Activated CD8-positive, alpha-beta T cell treated with anti-CD3 and anti-CD28 coated beads, Interleukin-2, amount 10 ng/mL, durations not matched to agents 7 days and 5 days (primary cell): ENCODE measurements at regions of chr1 and their contacts with region 1.

Region 1: GRCh38 chr1:205658943-205659581 is 21.2 kb downstream of the SLC45A3 start:
- DNase-seq: peak; percentile 82
- ATAC-seq: peak; percentile 93
- H3K4me3 Mint-ChIP-seq: no peak overlapping the region
- H3K27ac Mint-ChIP-seq: no peak overlapping the region
- H3K4me1 Mint-ChIP-seq: no peaks in the 10 kb centered on the region
- H3K27me3 Mint-ChIP-seq: peaks cover 5% of the 10 kb centered on the region

Region 2: DNA sequence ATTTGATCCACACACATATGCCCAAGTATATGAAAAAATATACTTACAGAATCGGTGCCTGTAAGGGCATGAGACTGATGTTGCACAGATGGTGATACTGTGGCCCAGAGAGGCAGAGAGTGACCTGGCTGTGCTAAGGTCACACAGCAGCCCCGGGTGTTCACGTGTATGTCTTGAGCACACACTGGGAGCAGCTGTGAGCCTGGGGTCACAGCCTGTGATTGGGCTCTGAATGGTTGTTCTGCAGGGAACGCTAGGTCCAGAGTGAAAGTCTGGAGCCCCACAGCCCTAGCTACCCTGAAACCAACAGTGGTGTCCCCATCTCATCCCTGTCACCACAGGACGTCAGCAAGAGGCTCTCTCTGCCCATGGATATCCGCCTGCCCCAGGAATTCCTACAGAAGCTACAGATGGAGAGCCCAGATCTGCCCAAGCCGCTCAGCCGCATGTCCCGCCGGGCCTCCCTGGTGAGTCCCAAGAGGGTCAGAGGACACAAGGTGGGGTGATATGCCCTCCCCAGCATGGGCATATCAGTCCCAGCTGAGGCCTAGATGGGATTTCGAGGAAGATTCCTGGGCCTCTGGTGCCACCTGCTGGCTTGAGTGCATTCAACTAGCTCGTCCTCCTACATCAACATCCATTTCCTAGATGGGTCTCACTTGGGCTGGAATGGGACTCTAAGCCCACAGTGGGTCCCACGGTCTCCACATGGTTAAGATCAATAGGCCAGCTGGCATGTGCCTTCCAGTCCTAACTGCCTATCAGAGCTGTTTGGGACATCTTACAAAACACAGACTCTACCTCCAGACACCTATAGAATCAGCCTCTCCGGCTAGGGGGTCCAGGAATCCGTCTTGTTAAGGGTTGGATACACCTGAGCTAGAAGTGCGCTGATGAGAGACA is 134.9 kb before region 1 on chr1:
- CTCF ChIA-PET with region 1: interaction called, 104 read pairs
- POLR2A ChIA-PET with region 1: no interaction called
- DNase-seq: peak; percentile 79
- ATAC-seq: no peak
- H3K4me3 Mint-ChIP-seq: no peak overlapping the region
- H3K27ac Mint-ChIP-seq: no peak overlapping the region
- H3K4me1 Mint-ChIP-seq: no peaks in the 10 kb centered on the region
- H3K27me3 Mint-ChIP-seq: no peaks in the 10 kb centered on the region

Region 3: DNA sequence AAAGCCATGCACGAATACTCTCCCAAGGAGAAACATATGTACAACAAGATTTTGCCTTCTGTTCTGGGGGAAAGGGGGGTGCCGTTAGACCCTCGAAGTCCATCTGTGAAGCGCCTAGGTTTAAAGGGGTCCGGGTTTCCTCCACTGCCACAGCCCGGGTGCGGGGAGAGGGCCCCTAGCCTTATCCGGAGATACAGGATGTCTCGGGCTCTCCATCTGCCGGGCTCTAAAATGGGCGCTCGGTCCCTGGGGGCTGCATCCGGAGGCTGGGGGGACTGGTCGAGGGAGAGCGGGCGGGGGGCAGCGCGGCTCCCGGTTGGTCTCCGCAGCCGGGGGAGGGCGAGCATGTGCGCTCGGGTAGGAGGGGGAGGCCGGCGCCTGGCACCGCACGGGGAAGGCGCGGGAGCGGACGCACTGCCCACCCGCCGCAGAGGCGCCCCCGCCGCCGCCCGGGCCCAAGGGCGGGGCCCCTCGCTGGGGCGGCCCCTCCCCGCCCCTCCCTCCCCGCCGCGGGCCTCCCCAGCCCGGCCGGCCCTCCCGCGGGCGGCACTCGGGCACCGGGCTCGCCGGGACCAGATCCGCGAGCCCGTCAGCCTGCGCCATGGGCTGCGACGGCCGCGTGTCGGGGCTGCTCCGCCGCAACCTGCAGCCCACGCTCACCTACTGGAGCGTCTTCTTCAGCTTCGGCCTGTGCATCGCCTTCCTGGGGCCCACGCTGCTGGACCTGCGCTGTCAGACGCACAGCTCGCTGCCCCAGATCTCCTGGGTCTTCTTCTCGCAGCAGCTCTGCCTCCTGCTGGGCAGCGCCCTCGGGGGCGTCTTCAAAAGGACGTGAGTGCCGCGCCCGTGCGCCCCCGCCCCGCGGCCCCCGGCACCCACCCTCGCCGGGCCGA is 90.3 kb before region 1 on chr1:
- CTCF ChIA-PET with region 1: interaction called, 17 read pairs
- POLR2A ChIA-PET with region 1: no interaction called
- DNase-seq: no peak
- ATAC-seq: peak; percentile 56
- H3K4me3 Mint-ChIP-seq: no peak overlapping the region
- H3K27ac Mint-ChIP-seq: no peak overlapping the region
- H3K4me1 Mint-ChIP-seq: peaks cover 3% of the 10 kb centered on the region
- H3K27me3 Mint-ChIP-seq: peaks cover 55% of the 10 kb centered on the region

Region 4: GRCh38 chr1:205631727-205632373 is 27.2 kb before region 1 on chr1 and contains the start of gene ELK4:
- CTCF ChIA-PET with region 1: interaction called, 138 read pairs
- POLR2A ChIA-PET with region 1: interaction called, 13 read pairs
- DNase-seq: peak; percentile 99
- ATAC-seq: peak; percentile 83
- H3K4me3 Mint-ChIP-seq: peak within 1 kb of the TSS; percentile 90
- H3K27ac Mint-ChIP-seq: peak within 1 kb of the TSS; percentile 98
- H3K4me1 Mint-ChIP-seq: peaks cover 42% of the 10 kb centered on the region
- H3K27me3 Mint-ChIP-seq: peaks cover 4% of the 10 kb centered on the region
- total RNA-seq, gene ELK4: 95.2 to 97.5 TPM

Region 5: DNA sequence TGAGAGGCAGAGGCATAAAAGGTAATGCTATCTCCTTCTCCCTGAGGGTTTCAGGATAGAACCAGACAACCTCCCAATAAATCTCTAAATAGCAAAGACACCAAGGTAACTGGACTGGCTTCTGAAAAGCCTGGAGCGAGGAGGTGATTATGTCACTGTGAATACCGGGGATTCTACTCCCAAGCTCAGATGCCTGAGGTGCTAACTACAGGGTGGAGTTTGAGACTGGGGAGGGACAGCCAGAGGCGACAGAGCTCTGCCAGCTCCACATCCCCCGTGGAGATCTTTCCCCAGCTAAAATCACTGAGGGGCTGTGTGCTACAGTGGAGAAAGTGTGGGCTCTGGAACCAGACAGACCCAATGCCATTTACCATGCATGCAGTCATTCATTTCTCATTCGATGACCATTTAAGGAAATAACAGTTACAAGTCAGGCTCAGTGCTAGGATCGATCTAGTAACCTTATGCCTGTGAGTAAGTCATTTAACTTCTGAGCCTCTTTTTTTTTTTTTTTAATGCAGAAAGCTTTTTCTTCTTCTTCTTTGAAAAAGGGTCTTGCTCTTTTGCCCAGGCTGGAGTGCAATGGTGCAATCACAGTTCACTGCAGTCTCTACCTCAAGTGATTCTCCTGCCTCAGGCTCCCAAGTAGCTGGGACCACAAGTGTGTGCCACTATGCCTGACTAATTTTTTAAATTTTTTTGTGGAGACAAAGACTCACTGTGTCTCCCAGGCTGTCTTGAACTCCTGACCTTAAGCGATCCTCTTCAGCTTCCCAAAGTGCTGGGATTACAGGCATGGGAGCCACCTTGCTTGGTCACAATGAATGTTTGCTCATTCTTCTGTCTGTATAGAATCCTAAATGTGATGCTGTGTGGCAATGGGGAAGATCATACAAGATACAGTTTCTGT is 29.4 kb after region 1 on chr1:
- CTCF ChIA-PET with region 1: interaction called, 10 read pairs
- POLR2A ChIA-PET with region 1: no interaction called
- DNase-seq: no peak
- ATAC-seq: no peak
- H3K4me3 Mint-ChIP-seq: no peak overlapping the region
- H3K27ac Mint-ChIP-seq: no peak overlapping the region
- H3K4me1 Mint-ChIP-seq: peaks cover 5% of the 10 kb centered on the region
- H3K27me3 Mint-ChIP-seq: peaks cover 18% of the 10 kb centered on the region

Region 6: GRCh38 chr1:205775015-205775716 is 116.1 kb after region 1 on chr1 and contains the start of gene RAB29:
- CTCF ChIA-PET with region 1: interaction called, 49 read pairs
- POLR2A ChIA-PET with region 1: no interaction called
- DNase-seq: peak; percentile 92
- ATAC-seq: peak; percentile 88
- H3K4me3 Mint-ChIP-seq: peak within 1 kb of the TSS; percentile 97
- H3K27ac Mint-ChIP-seq: peak within 1 kb of the TSS; percentile 92
- H3K4me1 Mint-ChIP-seq: peaks cover 56% of the 10 kb centered on the region
- H3K27me3 Mint-ChIP-seq: no peaks in the 10 kb centered on the region
- total RNA-seq, gene RAB29: 42.5 to 42.7 TPM

Region 7: DNA sequence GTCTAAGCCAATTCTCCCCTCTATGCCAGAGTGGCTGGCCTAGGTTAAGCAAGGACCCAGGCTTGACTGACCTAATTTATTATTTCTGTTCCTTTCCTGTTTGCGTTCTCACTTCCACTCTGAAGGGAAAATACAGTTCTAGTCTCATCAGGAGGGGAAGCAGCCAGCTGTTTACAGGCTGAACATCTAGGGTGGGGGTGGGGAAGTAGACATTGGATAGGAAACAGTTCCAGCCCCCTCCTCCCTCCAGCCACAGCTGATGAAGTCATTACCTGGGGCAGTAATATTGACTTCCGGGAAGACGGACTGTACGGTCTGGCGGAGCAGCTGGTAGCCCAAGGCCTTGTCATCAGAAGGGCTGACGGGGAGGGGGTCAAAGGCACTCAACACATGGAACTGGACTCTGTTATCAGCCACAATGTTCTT is 173.3 kb after region 1 on chr1:
- CTCF ChIA-PET with region 1: no interaction called
- POLR2A ChIA-PET with region 1: no interaction called
- DNase-seq: no peak
- ATAC-seq: no peak
- H3K4me3 Mint-ChIP-seq: no peak overlapping the region
- H3K27ac Mint-ChIP-seq: no peak overlapping the region
- H3K4me1 Mint-ChIP-seq: no peaks in the 10 kb centered on the region
- H3K27me3 Mint-ChIP-seq: no peaks in the 10 kb centered on the region

Region 8: DNA sequence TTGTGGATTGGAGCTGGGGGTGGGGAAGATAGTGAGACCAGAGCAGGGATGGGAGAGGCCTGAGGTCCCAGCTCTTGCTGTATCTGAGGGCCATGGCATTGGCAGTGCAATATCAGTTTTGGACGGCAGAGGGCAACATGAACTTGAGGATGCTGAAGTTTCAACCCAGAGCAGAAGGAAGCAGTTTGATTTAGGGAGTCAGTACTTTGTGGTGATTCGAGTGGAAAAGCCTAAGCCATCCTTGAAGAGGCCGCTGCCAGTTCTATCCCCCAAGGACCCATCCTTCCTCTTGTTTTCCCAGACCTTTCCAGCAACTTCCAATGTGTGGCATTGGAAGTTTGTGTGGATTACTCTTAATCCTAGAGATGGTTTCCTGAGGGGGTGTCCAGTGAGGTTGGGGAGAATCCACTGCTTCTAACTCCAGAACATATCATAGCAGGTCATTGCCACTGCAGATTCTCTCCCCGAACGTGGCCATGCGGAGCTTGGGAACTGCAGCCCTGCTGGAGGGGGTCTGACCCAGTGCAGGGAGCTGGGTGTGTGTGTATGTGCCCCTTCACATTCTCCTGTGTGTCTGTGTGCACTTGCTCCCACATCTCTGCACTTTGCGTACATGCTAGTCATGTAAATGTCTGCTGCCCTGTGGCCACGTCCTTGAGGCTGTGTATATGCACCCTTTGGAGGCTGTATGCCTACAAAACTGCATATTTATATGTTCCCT is 260.1 kb after region 1 on chr1:
- CTCF ChIA-PET with region 1: interaction called, 16 read pairs
- POLR2A ChIA-PET with region 1: no interaction called
- DNase-seq: peak; percentile 80
- ATAC-seq: peak; percentile 81
- H3K4me3 Mint-ChIP-seq: no peak overlapping the region
- H3K27ac Mint-ChIP-seq: no peak overlapping the region
- H3K4me1 Mint-ChIP-seq: peaks cover 8% of the 10 kb centered on the region
- H3K27me3 Mint-ChIP-seq: peaks cover 4% of the 10 kb centered on the region

Region 9: GRCh38 chr1:205986252-205986651 is 327.2 kb after region 1 on chr1:
- CTCF ChIA-PET with region 1: no interaction called
- POLR2A ChIA-PET with region 1: no interaction called
- DNase-seq: no peak
- ATAC-seq: no peak
- H3K4me3 Mint-ChIP-seq: no peak overlapping the region
- H3K27ac Mint-ChIP-seq: no peak overlapping the region
- H3K4me1 Mint-ChIP-seq: no peaks in the 10 kb centered on the region
- H3K27me3 Mint-ChIP-seq: peaks cover 7% of the 10 kb centered on the region